ENCODE measurements at regions of chr2 and their contacts with region 1.

Region 1: GRCh38 chr2:96407041-96407918 is 71.7 kb downstream of the NCAPH start:
- DNase-seq: peak; percentile 62 to 73 (median 65)
- ATAC-seq: peak; percentile 42 to 68 (median 54)
- H3K4me3 ChIP-seq: no peak overlapping the region
- H3K27ac ChIP-seq: peak overlapping the region in 7 of 12 donors; percentile 1 to 77 (median 68)
- H3K4me1 ChIP-seq: peaks cover 0 to 38% (median 23%) of the 10 kb centered on the region in 12 donors
- H3K27me3 ChIP-seq: no peaks in the 10 kb centered on the region
- CTCF ChIP-seq: peak; percentile 71 to 89 (median 81)
- POLR2A ChIP-seq: no peak

Region 2: DNA sequence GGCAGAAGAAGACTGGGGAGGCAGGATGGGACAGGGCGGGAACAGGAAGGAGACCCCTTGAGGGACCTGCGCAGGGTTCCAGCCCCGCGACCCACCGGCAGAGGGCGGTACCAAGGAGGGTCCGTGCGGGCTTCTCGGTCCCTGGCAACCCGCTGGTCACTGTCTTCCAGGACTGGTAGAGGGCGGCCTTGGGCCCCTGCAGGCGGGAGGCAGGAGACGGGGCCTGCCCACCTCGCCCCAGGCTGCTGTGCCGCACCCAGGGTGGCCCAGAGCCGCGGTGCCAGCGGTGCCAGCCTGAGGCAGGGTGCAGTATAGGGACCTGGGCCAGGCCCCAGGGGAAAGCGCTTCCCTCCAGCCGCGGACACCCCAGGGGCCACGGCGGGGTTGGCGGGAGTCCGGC is 63.4 kb after region 1 on chr2:
- intact Hi-C with region 1: loop called in 1 of 10 experiments (anchors 5 kb)
- DNase-seq: peak; percentile 50 to 86 (median 57)
- ATAC-seq: peak; percentile 20 to 92 (median 90)
- H3K4me3 ChIP-seq: peak overlapping the region in 11 of 12 donors; percentile 22 to 51 (median 33)
- H3K27ac ChIP-seq: peak overlapping the region in 2 of 12 donors; percentile 6 to 18
- H3K4me1 ChIP-seq: peaks cover 0 to 8% (median 5%) of the 10 kb centered on the region in 12 donors
- H3K27me3 ChIP-seq: peaks cover 0 to 8% (median 0%) of the 10 kb centered on the region in 9 donors
- CTCF ChIP-seq: peak; percentile 50 to 77 (median 63)
- POLR2A ChIP-seq: no peak

Measured in heart left ventricle (tissue), 16 donors.